BJ (cell line): ENCODE measurements at regions of chr15 and their contacts with region 1.

Region 1: GRCh38 chr15:72199711-72200212 is 2.2 kb upstream of the GRAMD2A start:
- DNase-seq: no peak
- H3K4me3 ChIP-seq: no peak overlapping the region
- H3K27me3 ChIP-seq: no peaks in the 10 kb centered on the region
- CTCF ChIP-seq: peak; percentile 92

Region 2: GRCh38 chr15:71588746-71589145 is 611.0 kb before region 1 on chr15:
- CTCF ChIA-PET with region 1: no interaction called
- POLR2A ChIA-PET with region 1: no interaction called
- DNase-seq: peak; percentile 31
- H3K4me3 ChIP-seq: no peak overlapping the region
- H3K27me3 ChIP-seq: no peaks in the 10 kb centered on the region
- CTCF ChIP-seq: no peak

Region 3: GRCh38 chr15:72217216-72217615 is 17.5 kb after region 1 on chr15:
- CTCF ChIA-PET with region 1: interaction called, 16 read pairs
- POLR2A ChIA-PET with region 1: no interaction called
- DNase-seq: no peak
- H3K4me3 ChIP-seq: no peak overlapping the region
- H3K27me3 ChIP-seq: no peaks in the 10 kb centered on the region
- CTCF ChIP-seq: no peak

Region 4: GRCh38 chr15:72222259-72222832 is 22.6 kb after region 1 on chr15:
- CTCF ChIA-PET with region 1: interaction called, 16 read pairs
- POLR2A ChIA-PET with region 1: no interaction called
- DNase-seq: no peak
- H3K4me3 ChIP-seq: no peak overlapping the region
- H3K27me3 ChIP-seq: no peaks in the 10 kb centered on the region
- CTCF ChIP-seq: no peak